Naive thymus-derived CD4-positive, alpha-beta T cell (primary cell): ENCODE measurements at regions of chr15 and their contacts with region 1.

Region 1: DNA sequence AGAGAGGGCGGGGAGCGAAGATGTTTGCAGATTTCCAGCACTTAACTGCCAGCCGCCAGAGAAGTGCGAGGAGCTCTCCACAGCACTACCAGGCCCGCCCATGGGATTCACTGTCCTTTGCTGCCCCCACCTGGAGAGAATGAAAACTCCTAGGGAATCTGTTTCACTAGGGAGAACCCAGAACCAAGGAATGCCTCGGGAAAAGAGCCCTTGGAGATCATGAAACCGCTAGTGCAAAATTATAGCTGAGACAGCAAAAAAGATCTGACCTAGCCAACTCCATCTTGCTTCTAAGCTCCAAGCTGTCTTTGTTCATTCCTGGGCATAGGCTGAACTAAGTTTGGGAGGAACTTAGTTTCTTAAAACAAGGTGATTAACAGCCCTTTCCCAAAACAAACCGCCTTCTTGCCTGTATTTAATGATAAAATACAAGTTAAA is 82.6 kb upstream of the GCNT3 start:
- DNase-seq: peak; percentile 44 to 74 (median 65)
- ATAC-seq: peak; percentile 89
- H3K4me3 ChIP-seq: no peak overlapping the region
- H3K4me3 Mint-ChIP-seq: no peak overlapping the region
- H3K27ac ChIP-seq: no peak overlapping the region
- H3K27ac Mint-ChIP-seq: peak overlapping the region in 5 of 9 donors; percentile 2 to 48 (median 22)
- H3K4me1 ChIP-seq: peaks cover 0 to 8% of the 10 kb centered on the region in 2 donors
- H3K4me1 Mint-ChIP-seq: peaks cover 14 to 28% (median 20%) of the 10 kb centered on the region in 7 donors
- H3K27me3 ChIP-seq: no peaks in the 10 kb centered on the region
- H3K27me3 Mint-ChIP-seq: peaks cover 0 to 15% (median 0%) of the 10 kb centered on the region in 5 donors

Region 2: GRCh38 chr15:58839485-58839884 is 689.5 kb before region 1 on chr15:
- CTCF ChIA-PET with region 1: no interaction called
- POLR2A ChIA-PET with region 1: no interaction called
- intact Hi-C with region 1: loop called in 1 of 2 experiments (anchors 1 kb)
- DNase-seq: peak in 2 of 9 donors; percentile 2 to 15
- ATAC-seq: no peak
- H3K4me3 ChIP-seq: no peak overlapping the region
- H3K4me3 Mint-ChIP-seq: no peak overlapping the region
- H3K27ac ChIP-seq: no peak overlapping the region
- H3K27ac Mint-ChIP-seq: no peak overlapping the region
- H3K4me1 ChIP-seq: no peaks in the 10 kb centered on the region
- H3K4me1 Mint-ChIP-seq: peaks cover 0 to 2% (median 0%) of the 10 kb centered on the region in 7 donors
- H3K27me3 ChIP-seq: no peaks in the 10 kb centered on the region
- H3K27me3 Mint-ChIP-seq: no peaks in the 10 kb centered on the region

Region 3: DNA sequence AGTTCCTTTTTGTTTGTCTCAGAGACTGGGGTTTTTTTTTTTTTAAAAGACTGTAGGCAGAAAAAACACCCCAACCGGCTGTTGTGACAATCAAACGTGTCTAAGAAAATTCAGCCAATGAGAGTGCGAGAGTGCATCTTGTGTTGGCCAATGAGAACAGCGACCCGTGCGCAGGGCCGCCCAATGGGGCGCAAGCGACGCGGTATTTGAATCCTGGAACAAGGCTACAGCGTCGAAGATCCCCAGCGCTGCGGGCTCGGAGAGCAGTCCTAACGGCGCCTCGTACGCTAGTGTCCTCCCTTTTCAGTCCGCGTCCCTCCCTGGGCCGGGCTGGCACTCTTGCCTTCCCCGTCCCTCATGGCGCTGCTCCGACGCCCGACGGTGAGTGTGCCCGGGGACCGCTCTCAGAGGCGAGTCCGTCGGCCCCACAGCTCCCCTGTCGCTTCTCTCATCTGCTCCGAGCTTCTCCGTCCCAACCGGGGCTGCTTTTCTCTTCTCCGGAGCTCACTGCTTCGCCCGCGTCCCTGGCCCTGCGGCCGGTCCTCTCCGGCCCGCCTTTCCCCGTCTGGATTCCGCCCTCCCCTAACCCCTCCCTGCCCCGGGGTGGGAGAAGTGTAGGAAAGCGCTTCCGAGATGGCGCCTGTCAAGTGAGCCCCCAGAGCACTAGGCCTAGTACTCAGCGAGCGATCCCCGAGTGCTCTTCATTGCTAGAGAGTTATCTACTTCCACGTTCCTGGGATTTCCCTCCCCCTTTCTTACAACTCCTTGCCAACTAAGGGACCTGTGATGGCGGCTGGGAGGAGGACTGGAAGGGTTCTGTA is 423.9 kb before region 1 on chr15 and contains the start of gene CCNB2:
- CTCF ChIA-PET with region 1: no interaction called
- POLR2A ChIA-PET with region 1: no interaction called
- intact Hi-C with region 1: loop called in 1 of 2 experiments (anchors 10 kb)
- DNase-seq: peak; percentile 63 to 91 (median 87)
- ATAC-seq: peak; percentile 100
- H3K4me3 ChIP-seq: peak within 1 kb of the TSS; percentile 77
- H3K4me3 Mint-ChIP-seq: peak within 1 kb of the TSS; percentile 89 to 100 (median 93)
- H3K27ac ChIP-seq: peak within 1 kb of the TSS; percentile 71
- H3K27ac Mint-ChIP-seq: peak within 1 kb of the TSS; percentile 94 to 100 (median 98)
- H3K4me1 ChIP-seq: peaks cover 7 to 11% of the 10 kb centered on the region in 2 donors
- H3K4me1 Mint-ChIP-seq: peaks cover 9 to 49% (median 13%) of the 10 kb centered on the region in 7 donors
- H3K27me3 ChIP-seq: no peaks in the 10 kb centered on the region
- H3K27me3 Mint-ChIP-seq: no peaks in the 10 kb centered on the region
- total RNA-seq, gene CCNB2: 0.27 to 52.2 (median 0.41) TPM

Region 4: GRCh38 chr15:59247364-59247763 is 281.6 kb before region 1 on chr15:
- CTCF ChIA-PET with region 1: interaction called, 34 read pairs
- POLR2A ChIA-PET with region 1: no interaction called
- intact Hi-C with region 1: no loop called
- DNase-seq: peak in 8 of 9 donors; percentile 8 to 50 (median 33)
- ATAC-seq: peak; percentile 79
- H3K4me3 ChIP-seq: no peak overlapping the region
- H3K4me3 Mint-ChIP-seq: no peak overlapping the region
- H3K27ac ChIP-seq: no peak overlapping the region
- H3K27ac Mint-ChIP-seq: no peak overlapping the region
- H3K4me1 ChIP-seq: no peaks in the 10 kb centered on the region
- H3K4me1 Mint-ChIP-seq: peaks cover 0 to 25% (median 0%) of the 10 kb centered on the region in 7 donors
- H3K27me3 ChIP-seq: no peaks in the 10 kb centered on the region
- H3K27me3 Mint-ChIP-seq: peaks cover 0 to 1% (median 0%) of the 10 kb centered on the region in 5 donors

Region 5: GRCh38 chr15:59642351-59642750 is 113.4 kb after region 1 on chr15:
- CTCF ChIA-PET with region 1: interaction called, 3 read pairs
- POLR2A ChIA-PET with region 1: no interaction called
- intact Hi-C with region 1: loop called (anchors 2 to 5 kb)
- DNase-seq: no peak
- ATAC-seq: no peak
- H3K4me3 ChIP-seq: no peak overlapping the region
- H3K4me3 Mint-ChIP-seq: no peak overlapping the region
- H3K27ac ChIP-seq: no peak overlapping the region
- H3K27ac Mint-ChIP-seq: peak overlapping the region in 1 of 9 donors; percentile 28
- H3K4me1 ChIP-seq: no peaks in the 10 kb centered on the region
- H3K4me1 Mint-ChIP-seq: peaks cover 0 to 14% (median 4%) of the 10 kb centered on the region in 7 donors
- H3K27me3 ChIP-seq: no peaks in the 10 kb centered on the region
- H3K27me3 Mint-ChIP-seq: no peaks in the 10 kb centered on the region